ENCODE measurements at regions of chr14 and their contacts with region 1.

Region 1: GRCh38 chr14:69648477-69649451 is 37.4 kb downstream of the SUSD6 start:
- DNase-seq: peak; percentile 81
- ATAC-seq: peak; percentile 85
- H3K4me3 ChIP-seq: peak overlapping the region; percentile 56
- H3K27ac ChIP-seq: peak overlapping the region; percentile 96
- H3K4me1 ChIP-seq: peaks cover 68% of the 10 kb centered on the region
- H3K27me3 ChIP-seq: no peaks in the 10 kb centered on the region
- CTCF ChIP-seq: no peak
- EP300 ChIP-seq: peak in 1 of 2 experiments; percentile 75; a peak in 2 of 4 replicates
- POLR2A ChIP-seq: no peak
- RAD21 ChIP-seq: no peak

Region 2: GRCh38 chr14:69259527-69260189 is 389.1 kb before region 1 on chr14 and contains the start of gene GALNT16:
- CTCF ChIA-PET with region 1: no interaction called
- POLR2A ChIA-PET with region 1: no interaction called
- RAD21 ChIA-PET with region 1: no interaction called
- SMC1A ChIA-PET with region 1: no interaction called
- in situ Hi-C with region 1: no loop called
- intact Hi-C with region 1: no loop called
- DNase-seq: no peak
- ATAC-seq: no peak
- H3K4me3 ChIP-seq: no peak within 1 kb of the TSS; the same call in 1 of the 2 replicates
- H3K27ac ChIP-seq: no peak within 1 kb of the TSS
- H3K4me1 ChIP-seq: peaks cover 4% of the 10 kb centered on the region
- H3K27me3 ChIP-seq: peaks cover 22 to 25% of the 10 kb centered on the region in 2 experiments
- CTCF ChIP-seq: 0 out of 6 replicates have a peak, but pooled peaks of 1 of the 3 experiments have one; percentile 7
- EP300 ChIP-seq: no peak
- POLR2A ChIP-seq: no peak
- RAD21 ChIP-seq: no peak
- polyA plus RNA-seq, gene GALNT16: 0.02 TPM in 1 of 2 experiments, not detected in the other

Region 3: GRCh38 chr14:69582212-69582611 is 66.6 kb before region 1 on chr14:
- CTCF ChIA-PET with region 1: no interaction called
- POLR2A ChIA-PET with region 1: no interaction called
- RAD21 ChIA-PET with region 1: no interaction called
- SMC1A ChIA-PET with region 1: no interaction called
- in situ Hi-C with region 1: no loop called
- intact Hi-C with region 1: no loop called
- DNase-seq: no peak
- ATAC-seq: no peak
- H3K4me3 ChIP-seq: no peak overlapping the region
- H3K27ac ChIP-seq: no peak overlapping the region
- H3K4me1 ChIP-seq: no peaks in the 10 kb centered on the region
- H3K27me3 ChIP-seq: no peaks in the 10 kb centered on the region
- CTCF ChIP-seq: no peak
- EP300 ChIP-seq: no peak
- POLR2A ChIP-seq: no peak
- RAD21 ChIP-seq: no peak

Region 4: DNA sequence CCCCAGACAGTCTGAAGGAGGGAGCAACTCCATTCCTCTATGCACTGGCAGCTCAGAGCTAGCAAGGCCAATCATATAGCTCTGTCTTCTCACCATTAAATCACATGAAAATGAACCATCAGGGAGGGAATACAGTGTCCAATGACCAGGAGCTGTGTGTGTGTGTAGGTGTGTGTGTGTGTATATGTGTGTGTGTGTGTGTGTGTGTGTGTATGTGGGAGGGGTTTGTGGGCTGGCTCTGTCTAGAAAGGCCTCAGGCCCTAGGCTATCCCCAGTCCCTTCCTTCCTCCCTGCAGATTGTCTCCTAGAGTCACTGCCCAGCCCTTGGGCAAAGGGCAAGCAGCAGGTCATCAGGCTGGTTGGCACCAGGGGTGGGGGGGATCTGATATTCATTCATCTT is 43.0 kb before region 1 on chr14:
- CTCF ChIA-PET with region 1: interaction called, 6 read pairs
- POLR2A ChIA-PET with region 1: interaction called, 22 read pairs
- RAD21 ChIA-PET with region 1: interaction called, 178 read pairs
- SMC1A ChIA-PET with region 1: interaction called, 164 read pairs
- in situ Hi-C with region 1: no loop called
- intact Hi-C with region 1: no loop called
- DNase-seq: no peak
- ATAC-seq: peak; percentile 41
- H3K4me3 ChIP-seq: no peak overlapping the region
- H3K27ac ChIP-seq: no peak overlapping the region
- H3K4me1 ChIP-seq: peaks cover 8% of the 10 kb centered on the region
- H3K27me3 ChIP-seq: no peaks in the 10 kb centered on the region
- CTCF ChIP-seq: no peak
- EP300 ChIP-seq: no peak
- POLR2A ChIP-seq: no peak
- RAD21 ChIP-seq: no peak

Region 5: DNA sequence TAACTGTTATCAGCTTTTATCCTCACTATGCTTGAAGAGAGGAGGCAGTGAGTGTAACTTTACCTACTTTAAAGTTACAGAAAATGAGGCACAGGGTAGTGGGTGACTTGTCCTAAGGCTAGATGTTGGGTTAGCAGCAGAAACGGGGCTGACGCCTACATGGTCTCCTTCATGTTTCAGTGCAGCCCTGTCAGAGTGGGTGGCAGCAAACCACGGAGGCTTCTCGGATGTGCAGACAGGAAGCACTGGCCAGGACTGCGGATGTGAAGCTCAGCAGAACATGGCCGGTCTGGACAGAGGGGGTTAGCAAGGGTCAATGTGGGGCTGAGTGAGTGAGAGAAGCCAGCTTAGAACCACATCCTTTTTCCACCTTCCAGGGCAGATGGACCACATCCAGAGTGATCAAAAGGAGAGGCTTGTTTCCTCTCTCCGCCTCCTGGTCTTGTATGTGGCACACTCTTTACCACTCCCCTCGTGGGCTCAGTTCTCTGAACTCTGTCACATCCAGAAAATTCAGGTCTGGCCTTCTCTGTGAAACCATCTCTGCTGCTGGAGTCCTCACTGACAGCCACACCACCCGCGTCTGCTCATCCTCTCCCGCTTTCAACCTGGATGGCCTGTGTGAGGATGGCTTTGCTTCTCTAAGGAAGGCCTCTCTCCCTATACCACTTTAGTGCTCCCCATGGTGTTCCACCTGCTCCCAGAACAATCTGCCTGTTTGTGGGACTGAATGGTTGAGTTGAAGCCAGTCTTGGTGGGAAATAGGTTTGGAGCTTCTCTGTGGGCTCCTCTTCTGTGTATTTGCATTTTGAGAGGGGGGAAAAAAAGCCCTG is 23.2 kb before region 1 on chr14:
- CTCF ChIA-PET with region 1: interaction called, 15 read pairs
- POLR2A ChIA-PET with region 1: interaction called, 40 read pairs
- RAD21 ChIA-PET with region 1: interaction called, 59 read pairs
- SMC1A ChIA-PET with region 1: interaction called, 336 read pairs
- in situ Hi-C with region 1: no loop called
- intact Hi-C with region 1: no loop called
- DNase-seq: peak; percentile 88
- ATAC-seq: peak; percentile 93
- H3K4me3 ChIP-seq: peak overlapping the region; percentile 65
- H3K27ac ChIP-seq: peak overlapping the region; percentile 82
- H3K4me1 ChIP-seq: peaks cover 61% of the 10 kb centered on the region
- H3K27me3 ChIP-seq: no peaks in the 10 kb centered on the region
- CTCF ChIP-seq: no peak
- EP300 ChIP-seq: peak in 1 of 2 experiments; percentile 67; a peak in 1 of 4 replicates
- POLR2A ChIP-seq: peak; percentile 60; the same call in 1 of the 2 replicates
- RAD21 ChIP-seq: peak; percentile 21; the same call in 1 of the 2 replicates

Region 6: GRCh38 chr14:69637503-69638030 is 11.2 kb before region 1 on chr14:
- CTCF ChIA-PET with region 1: interaction called, 30 read pairs
- POLR2A ChIA-PET with region 1: interaction called, 88 read pairs
- RAD21 ChIA-PET with region 1: interaction called, 63 read pairs
- SMC1A ChIA-PET with region 1: interaction called, 336 read pairs
- in situ Hi-C with region 1: no loop called
- intact Hi-C with region 1: no loop called
- DNase-seq: no peak
- ATAC-seq: peak; percentile 57
- H3K4me3 ChIP-seq: peak overlapping the region; percentile 43; the same call in 1 of the 2 replicates
- H3K27ac ChIP-seq: peak overlapping the region; percentile 72
- H3K4me1 ChIP-seq: peaks cover 65% of the 10 kb centered on the region
- H3K27me3 ChIP-seq: no peaks in the 10 kb centered on the region
- CTCF ChIP-seq: no peak
- EP300 ChIP-seq: no peak
- POLR2A ChIP-seq: no peak
- RAD21 ChIP-seq: no peak

Region 7: DNA sequence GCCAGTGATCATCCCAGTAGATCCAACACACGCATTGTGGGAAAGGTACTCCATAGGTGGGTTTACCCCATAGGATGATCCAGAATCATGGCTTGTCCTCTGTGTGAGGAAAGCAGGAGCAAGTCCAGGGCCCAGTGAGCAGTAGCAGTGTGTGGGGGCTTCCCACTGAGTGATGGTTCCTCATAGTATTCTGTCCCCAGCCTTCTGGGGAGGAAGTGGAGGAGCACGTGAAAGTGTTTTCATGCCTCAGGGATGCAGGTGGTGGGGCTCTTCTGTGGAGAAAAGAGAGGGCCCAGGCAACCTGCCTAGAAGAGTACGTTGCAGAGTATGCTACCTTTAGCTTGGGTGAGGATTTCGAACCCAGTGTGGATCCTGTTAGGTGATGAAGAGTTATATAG is 19.2 kb after region 1 on chr14:
- CTCF ChIA-PET with region 1: interaction called, 3 read pairs
- POLR2A ChIA-PET with region 1: interaction called, 10 read pairs
- RAD21 ChIA-PET with region 1: interaction called, 13 read pairs
- SMC1A ChIA-PET with region 1: interaction called, 57 read pairs
- in situ Hi-C with region 1: no loop called
- intact Hi-C with region 1: loop called (anchors 2 kb)
- DNase-seq: no peak
- ATAC-seq: peak; percentile 65
- H3K4me3 ChIP-seq: peak overlapping the region; percentile 58
- H3K27ac ChIP-seq: peak overlapping the region; percentile 91
- H3K4me1 ChIP-seq: peaks cover 74% of the 10 kb centered on the region
- H3K27me3 ChIP-seq: no peaks in the 10 kb centered on the region
- CTCF ChIP-seq: no peak
- EP300 ChIP-seq: no peak
- POLR2A ChIP-seq: no peak
- RAD21 ChIP-seq: no peak

Region 8: GRCh38 chr14:69673578-69674305 is 25.0 kb after region 1 on chr14:
- CTCF ChIA-PET with region 1: interaction called, 3 read pairs
- POLR2A ChIA-PET with region 1: interaction called, 10 read pairs
- RAD21 ChIA-PET with region 1: interaction called, 13 read pairs
- SMC1A ChIA-PET with region 1: interaction called, 57 read pairs
- in situ Hi-C with region 1: no loop called
- intact Hi-C with region 1: loop called (anchors 2 kb)
- DNase-seq: no peak
- ATAC-seq: peak; percentile 46
- H3K4me3 ChIP-seq: no peak overlapping the region
- H3K27ac ChIP-seq: peak overlapping the region; percentile 77
- H3K4me1 ChIP-seq: peaks cover 72% of the 10 kb centered on the region
- H3K27me3 ChIP-seq: no peaks in the 10 kb centered on the region
- CTCF ChIP-seq: peak in 2 of 3 experiments; percentile 15 to 16; a peak in 2 of 6 replicates
- EP300 ChIP-seq: no peak
- POLR2A ChIP-seq: no peak
- RAD21 ChIP-seq: peak; percentile 25; the same call in 1 of the 2 replicates

Region 9: DNA sequence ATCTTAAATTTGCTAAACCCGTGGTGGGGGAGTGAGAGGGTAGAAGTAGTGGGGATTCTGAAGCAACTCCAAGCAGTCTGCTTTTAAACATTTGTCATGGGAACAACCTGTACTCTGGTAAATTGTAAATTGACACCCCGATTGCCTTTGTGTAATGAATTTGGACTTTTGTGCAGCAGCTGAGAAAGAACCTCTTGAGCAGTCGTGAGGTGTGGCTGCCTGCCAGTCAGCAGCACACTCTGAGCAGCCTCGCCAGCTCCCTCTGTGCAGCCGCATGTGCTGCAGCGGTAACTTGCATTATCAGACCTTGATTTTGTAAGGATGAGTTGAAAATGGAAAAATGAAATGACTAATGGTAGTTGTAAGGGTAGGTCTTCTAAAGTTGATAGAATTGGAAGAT is 37.0 kb after region 1 on chr14:
- CTCF ChIA-PET with region 1: interaction called, 3 read pairs
- POLR2A ChIA-PET with region 1: interaction called, 5 read pairs
- RAD21 ChIA-PET with region 1: interaction called, 5 read pairs
- SMC1A ChIA-PET with region 1: interaction called, 15 read pairs
- in situ Hi-C with region 1: no loop called
- intact Hi-C with region 1: no loop called
- DNase-seq: no peak
- ATAC-seq: no peak
- H3K4me3 ChIP-seq: no peak overlapping the region
- H3K27ac ChIP-seq: peak overlapping the region; percentile 61; the same call in 1 of the 2 replicates
- H3K4me1 ChIP-seq: peaks cover 48% of the 10 kb centered on the region
- H3K27me3 ChIP-seq: no peaks in the 10 kb centered on the region
- CTCF ChIP-seq: no peak
- EP300 ChIP-seq: no peak
- POLR2A ChIP-seq: no peak
- RAD21 ChIP-seq: no peak